GM13977 (cell line): ENCODE measurements at regions of chr5 and their contacts with region 1.

Region 1: DNA sequence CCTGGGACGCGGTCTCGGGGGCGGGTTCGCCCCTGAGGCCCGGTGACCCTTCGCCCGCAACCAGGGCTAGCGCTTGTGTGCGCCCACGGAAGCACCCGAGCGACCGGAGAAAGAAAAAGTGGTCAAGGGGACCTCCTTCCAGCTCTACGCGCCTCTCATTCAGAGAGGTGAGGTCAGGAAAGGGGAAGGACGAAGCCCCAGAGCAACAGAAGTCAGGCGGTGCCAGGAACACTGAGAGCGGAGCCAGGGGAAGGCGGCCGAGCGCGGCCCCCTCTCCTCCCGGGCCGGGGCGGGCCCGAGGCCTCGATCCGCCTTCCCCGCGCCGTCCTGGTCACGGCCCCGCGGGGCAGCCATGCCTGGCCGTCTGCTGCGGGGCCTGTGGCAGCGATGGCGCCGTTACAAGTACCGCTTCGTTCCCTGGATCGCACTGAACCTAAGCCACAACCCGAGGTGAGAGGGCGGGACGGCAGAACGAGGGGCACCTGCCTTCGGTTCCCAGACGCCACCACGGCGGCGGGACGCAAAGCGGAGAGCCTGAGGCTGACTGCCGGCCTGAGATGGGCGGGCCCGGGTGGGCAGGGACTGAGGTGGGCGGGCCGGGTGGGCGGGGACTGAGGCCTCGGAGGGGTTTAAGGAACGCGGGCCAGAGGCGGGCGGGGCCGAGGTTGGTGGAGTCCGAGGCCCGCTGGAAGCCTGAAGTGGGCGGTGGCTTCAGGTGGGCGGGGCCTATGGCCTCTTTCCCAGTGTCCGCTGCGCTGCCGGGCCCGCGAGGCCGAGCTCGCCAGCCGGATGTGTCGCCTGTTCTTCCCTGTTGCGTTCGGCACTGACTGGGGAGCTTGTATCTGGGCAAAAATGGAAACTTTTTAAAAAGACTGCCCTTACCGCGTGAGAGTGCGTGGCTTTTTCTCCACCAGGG is at the start of gene SETD9:
- DNase-seq: peak; percentile 97
- CTCF ChIP-seq: no peak

Region 2: GRCh38 chr5:57009811-57010210 is 100.3 kb after region 1 on chr5:
- in situ Hi-C with region 1: no loop called
- DNase-seq: no peak
- CTCF ChIP-seq: no peak

Region 3: GRCh38 chr5:57137401-57137800 is 227.8 kb after region 1 on chr5:
- in situ Hi-C with region 1: loop called (anchors 10 kb)
- DNase-seq: no peak
- CTCF ChIP-seq: no peak

Region 4: GRCh38 chr5:57221049-57221568 is 311.6 kb after region 1 on chr5:
- in situ Hi-C with region 1: loop called (anchors 25 kb)
- DNase-seq: peak; percentile 53
- CTCF ChIP-seq: peak; percentile 74